RWPE1 (cell line): ENCODE measurements at regions of chr7 and their contacts with region 1.

Region 1: GRCh38 chr7:86534641-86535040 is 109.1 kb upstream of the GRM3 start:
- DNase-seq: no peak
- H3K27ac ChIP-seq: no peak overlapping the region
- CTCF ChIP-seq: no peak

Region 2: DNA sequence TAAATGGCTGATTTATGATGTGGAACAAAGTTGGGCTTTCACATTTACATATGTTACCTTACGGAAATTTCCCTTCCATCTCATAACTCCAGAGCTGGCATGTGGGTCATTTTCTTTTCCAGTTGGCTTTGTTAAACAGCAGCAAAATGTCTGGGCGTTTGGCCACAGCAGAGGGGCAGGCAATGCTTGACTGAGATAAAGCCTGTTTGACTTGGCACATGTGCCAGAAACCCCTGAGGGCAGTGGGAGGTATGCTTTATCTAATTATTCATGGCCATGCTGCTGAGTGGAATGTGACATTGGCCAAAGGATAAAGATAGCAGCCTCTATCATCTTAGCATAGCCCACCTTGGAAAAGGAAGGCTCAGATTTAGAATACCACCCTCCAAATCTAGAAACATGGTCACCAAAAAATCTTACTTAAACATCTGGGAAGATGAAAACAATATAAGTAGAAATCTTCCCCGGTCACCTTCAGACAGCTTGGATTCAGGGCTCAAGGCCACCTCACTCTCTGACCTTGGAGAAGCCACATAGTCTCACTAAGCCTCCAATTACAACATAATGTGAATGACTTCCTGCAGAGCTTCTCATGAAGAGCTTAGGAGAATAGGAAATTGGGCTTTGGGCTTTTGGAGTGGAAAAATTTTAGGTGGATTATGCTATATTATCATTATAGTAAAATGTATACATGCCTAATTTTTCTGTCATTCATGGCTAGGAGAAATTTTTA is 210.5 kb after region 1 on chr7:
- CTCF ChIA-PET with region 1: interaction called, 10 read pairs
- POLR2A ChIA-PET with region 1: no interaction called
- DNase-seq: no peak
- H3K27ac ChIP-seq: no peak overlapping the region
- CTCF ChIP-seq: no peak

Region 3: GRCh38 chr7:87059525-87060287 is 525.1 kb after region 1 on chr7 and contains the start of gene ELAPOR2:
- CTCF ChIA-PET with region 1: no interaction called
- POLR2A ChIA-PET with region 1: no interaction called
- DNase-seq: peak; percentile 66
- H3K27ac ChIP-seq: peak within 1 kb of the TSS; percentile 65
- CTCF ChIP-seq: peak; percentile 76